Left cardiac atrium (tissue), 4 donors: ENCODE measurements at regions of chr7 and their contacts with region 1.

Region 1: DNA sequence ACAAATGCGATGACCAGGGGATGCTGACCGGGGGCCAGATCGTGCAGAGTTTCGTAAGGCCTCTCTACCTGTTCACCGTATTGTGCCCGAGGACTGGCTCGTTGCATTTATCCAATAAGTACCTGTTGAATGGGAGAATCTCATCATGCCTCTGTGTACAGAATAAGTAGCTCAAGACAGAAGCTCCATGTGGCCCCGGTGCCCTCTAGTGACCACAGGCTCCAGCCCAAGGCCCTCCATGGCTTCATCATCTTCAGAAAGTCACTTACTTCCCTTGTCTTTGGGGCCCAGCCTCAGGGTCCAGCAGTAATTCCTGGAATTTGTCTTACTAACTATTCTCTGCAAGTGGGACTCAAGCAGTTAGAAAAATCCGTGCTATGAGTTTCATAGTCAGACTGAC is 151.0 kb downstream of the CHN2 start:
- DNase-seq: peak; percentile 43
- ATAC-seq: peak; percentile 72 to 74

Region 2: GRCh38 chr7:28921822-28922221 is 423.8 kb before region 1 on chr7:
- intact Hi-C with region 1: loop called in 1 of 2 experiments (anchors 5 kb)
- DNase-seq: no peak
- ATAC-seq: peak; percentile 94

Region 3: DNA sequence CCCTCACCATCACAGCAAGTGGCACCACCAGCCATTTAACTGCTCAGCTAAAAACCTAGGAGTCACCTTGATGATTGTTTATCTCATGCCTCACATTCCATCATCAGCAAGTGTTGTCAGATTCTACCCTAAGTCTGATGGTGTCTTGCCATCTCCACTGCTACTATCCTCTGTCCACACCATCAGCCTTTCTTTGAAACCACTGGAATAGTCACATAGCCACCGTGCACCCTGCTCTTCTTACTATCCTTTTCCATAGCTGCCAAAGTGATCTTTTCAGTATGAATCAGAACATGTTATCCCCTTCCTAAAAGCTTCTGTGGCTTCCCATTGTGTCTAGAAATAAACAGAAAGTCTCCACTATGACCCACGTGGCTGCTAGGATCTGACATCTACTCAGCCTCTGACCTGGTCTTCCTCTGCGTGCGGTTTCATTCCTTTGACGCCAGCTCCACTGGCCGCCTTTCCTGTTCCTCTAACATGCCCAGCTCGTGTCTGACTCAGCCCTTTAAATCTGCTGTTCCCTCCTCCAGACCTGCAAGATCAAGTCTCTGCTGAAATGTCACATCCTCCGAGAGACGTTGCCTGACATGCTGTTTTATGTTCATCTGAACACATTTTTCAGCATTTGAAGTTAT is 167.5 kb before region 1 on chr7:
- intact Hi-C with region 1: no loop called
- DNase-seq: peak; percentile 69
- ATAC-seq: peak; percentile 78 to 90

Region 4: DNA sequence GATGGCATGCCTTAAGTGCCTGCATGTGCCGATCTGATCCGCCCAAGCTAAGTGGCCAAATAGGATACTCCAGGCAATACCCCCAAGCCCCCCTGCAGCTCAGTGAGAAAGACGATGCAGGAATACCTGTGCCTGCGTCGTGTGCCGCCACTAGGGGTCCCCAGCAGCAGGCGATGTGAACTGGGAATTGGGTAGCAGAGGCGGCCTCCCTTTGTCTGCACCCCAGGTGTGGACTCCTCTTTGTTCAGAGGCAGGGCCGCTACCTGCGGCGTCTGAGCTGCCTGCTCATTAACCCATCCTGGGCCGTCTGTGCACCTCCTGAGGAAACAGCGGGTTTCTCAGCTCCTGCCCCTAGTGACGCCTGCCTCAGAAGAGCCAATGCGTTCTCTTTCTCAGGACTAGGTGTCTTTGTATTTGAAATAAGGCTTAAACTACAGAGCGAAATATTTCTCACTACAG is 155.8 kb before region 1 on chr7:
- intact Hi-C with region 1: loop called in 1 of 2 experiments (anchors 5 kb)
- DNase-seq: peak; percentile 63
- ATAC-seq: peak; percentile 38 to 72

Region 5: DNA sequence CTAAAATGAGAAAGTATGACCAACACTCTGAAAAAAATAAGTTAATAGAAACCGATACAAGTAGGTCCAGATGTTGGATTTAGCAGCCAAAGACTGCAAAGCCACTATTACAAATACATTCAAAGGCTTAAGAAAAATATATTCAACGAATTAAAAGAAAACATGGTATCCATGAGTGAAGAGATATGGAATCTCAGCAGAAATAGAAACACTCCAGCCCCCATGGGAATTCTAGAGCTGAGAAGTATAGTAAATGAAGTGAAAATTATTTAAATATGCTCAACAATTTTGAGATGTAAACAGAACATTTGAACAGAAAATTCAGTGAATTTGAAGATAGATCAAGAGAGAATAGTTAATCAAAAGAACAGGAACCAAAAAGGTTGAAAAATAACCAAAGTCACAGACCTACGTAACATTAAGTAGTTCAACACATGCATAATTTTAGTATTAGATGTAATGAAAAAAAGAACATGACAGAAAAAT is 388.7 kb after region 1 on chr7:
- intact Hi-C with region 1: no loop called
- DNase-seq: no peak
- ATAC-seq: no peak